GM13976 (cell line): ENCODE measurements at regions of chr1 and their contacts with region 1.

Region 1: GRCh38 chr1:234842726-234843641 is 233.0 kb upstream of the IRF2BP2 start:
- DNase-seq: peak; percentile 69
- CTCF ChIP-seq: no peak

Region 2: DNA sequence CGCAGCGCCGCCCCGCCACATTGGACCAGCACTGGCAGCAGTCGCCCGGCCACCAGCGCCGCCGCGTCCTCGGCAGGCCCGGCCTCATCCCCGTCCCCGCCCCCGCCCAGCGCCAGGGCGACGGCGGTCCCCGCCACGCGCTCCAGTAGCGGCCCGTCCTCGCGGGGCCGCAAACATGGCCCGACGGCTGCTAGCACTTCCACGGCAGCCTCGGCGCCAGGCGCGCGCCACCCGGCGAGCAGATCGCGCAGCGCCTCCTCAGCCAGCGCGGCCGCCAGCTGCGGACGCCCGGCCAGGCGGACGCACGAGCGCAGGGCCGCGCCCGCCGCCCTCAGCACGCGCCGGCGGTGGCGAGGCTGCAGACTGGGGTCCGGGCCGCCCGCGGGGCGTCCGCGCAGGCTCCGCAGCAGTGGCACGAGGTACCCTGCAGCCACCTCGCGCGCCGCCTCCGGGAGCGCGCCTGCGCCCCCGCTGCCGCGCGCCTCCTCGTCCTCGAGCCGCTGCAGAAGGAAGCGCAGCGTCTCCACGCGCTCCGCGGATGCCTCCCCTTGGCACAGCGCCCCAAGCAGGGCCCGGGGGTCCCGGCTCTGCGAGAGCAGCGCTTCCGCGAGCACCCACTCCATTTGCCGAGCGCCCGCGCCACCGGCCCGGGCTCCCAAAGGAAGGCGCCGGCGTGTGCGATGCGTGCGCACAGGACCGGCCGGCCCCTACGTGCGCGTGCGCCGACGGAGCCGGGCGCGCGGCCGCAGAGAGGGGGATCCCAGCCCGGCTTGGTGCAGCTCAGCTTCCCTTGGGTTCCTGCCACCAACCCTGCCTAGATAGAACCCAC is 364.3 kb before region 1 on chr1 and contains the start of gene TARBP1:
- in situ Hi-C with region 1: no loop called
- DNase-seq: peak; percentile 87
- CTCF ChIP-seq: peak; percentile 51

Region 3: DNA sequence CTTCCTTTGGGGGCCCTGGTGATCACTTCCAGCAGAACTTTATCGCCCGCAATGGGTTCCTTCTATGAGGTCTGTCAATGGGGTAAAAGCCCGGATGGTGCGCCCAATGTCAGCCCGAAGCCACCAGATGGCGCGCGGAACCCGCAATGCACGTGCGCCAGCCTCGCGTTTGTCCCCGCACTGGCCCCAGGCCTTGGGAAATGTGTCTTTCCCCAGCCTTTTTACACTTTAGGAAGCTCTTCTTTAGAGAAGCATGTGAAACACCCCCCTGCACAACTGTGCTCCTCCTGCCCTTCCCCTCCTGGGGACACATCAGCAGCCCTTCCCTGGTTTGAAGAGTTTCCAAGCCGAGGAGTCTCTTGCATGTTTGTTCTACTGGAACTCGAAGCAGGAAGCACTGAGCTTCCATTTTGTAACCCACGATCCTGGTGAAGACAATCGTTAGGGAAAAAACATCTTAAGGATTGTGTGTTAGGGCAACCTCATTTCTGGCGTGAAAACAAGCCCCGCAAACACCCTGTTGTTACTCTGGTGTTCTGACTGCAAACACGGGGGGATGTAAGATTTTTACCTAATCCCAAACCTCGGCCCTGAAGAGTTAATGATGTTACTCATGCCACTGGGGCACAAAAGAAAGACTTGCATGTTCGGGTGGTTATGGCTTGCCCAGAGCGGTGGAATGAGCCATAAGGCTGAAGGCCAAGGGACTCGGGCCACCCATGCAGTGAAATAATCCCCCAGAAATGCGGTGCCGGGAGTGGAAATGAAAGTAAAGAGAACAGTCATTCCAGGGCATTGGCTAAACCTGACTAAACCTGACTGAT is 343.7 kb before region 1 on chr1:
- in situ Hi-C with region 1: loop called (anchors 10 kb)
- DNase-seq: peak; percentile 75
- CTCF ChIP-seq: peak; percentile 90

Region 4: DNA sequence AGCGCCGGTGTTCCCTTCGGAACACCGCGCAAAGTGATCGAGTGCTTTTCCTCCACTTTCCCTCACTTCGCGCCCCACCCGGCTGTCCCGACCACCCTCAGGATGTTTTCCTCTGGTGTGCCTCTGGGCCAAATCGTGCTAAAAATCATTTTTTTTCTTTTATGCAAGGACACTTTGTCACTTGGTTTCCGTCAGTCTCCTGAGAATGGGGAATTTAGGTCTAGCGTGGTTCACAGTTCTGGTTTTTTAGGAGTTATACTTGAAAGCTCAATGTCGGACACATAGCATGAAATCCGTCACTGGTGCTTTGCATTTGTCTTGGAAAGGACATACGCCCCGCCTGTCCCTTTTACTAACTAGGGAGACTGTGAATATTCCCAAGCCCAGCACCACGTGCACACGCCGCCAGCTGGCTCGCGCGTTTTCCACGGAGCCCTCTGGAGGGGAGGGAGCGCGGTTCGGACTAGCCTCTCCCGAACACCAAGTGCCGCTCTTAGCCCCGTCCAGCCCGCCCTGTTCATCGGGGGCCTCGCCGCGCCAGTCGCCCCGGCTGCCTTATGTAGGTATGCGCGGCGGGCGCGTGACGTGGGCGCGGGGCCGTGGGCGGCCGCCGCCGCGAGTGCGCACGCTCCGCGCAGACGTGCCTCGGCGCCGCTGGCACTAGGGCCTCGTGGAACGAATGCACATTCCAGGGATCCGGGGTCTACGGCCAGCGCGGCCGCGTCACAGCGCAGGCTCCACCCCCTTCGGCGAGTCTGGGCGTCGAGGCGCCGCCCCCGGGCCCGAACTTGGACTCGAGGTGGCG is 232.4 kb before region 1 on chr1:
- in situ Hi-C with region 1: loop called (anchors 25 kb)
- DNase-seq: peak; percentile 91
- CTCF ChIP-seq: no peak

Region 5: DNA sequence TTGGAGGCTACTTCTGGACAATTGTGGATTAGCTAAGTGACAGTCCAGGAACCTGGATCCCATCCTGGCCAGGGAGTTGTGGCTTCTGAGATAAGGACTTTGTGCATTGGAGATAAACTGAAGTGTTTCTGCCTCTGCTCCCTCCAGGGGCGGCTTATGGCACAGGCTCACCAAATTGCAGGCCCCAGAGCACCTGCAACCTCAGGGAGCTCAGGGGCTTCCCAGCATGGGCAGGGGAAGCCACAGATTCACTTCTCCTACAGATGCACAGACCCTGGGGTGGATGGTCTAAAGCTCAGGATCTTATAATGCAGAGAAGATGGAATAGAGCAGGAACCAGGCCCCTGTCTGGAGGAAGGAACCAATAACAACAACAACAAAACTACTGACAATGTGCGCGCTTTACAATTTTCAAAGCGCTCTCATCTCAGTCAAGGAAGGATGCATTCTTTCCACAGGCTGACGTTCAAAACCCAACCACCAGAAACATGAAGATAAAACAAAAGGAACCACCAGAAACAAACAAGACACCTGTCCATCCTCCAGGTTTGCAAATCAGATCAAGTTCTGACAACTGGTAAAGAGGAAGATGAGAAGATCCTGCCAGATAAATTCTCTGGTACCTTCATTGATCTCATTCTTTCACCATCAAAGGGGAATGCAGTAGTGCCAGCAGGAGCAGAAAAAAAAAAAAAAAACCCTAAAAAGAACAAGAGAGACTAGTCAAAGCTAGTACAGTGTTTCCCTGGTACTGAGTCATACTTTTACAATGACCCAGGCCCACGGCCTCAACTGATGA is 112.0 kb before region 1 on chr1:
- in situ Hi-C with region 1: loop called (anchors 25 kb)
- DNase-seq: peak; percentile 82
- CTCF ChIP-seq: peak; percentile 6

Region 6: DNA sequence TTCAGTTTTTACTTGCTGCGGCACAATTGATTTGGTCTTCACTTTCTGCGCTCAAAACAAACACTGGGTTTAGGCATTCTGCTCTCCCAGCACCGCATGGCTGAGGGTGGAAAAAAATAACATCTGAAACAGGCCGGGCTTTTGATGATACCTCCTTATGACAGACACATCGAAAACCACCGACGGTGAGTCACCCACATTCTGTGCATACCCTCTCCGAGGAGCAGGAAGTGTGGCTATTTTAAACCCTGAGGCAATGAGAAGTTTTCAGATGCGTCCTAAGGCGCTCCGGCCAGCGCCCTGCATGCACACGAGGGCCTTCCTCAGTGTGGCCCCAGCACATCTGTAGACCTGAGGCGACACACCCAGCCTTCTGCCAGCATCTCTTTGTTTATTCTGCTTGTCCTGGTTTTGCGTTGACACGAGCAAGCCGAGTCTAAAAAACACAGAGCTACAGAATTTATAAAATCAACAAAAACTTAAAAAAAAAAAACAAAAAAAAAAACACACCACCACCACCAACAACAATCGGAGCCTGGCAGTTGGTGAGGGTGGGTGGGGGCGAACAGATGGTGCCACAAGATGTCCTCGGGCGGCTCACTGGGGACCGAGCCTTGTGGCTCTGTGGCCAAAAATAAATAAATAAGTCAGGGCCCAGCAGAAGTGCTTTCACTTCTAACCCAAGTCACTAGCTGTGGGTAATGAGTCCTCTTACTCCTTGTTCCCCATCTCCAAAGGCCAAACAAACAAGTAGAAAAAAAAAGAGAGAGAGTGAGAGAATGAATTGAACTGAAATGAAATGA is 70.4 kb before region 1 on chr1:
- in situ Hi-C with region 1: no loop called
- DNase-seq: peak; percentile 89
- CTCF ChIP-seq: peak; percentile 1

Region 7: GRCh38 chr1:234918181-234918841 is 75.3 kb after region 1 on chr1:
- in situ Hi-C with region 1: no loop called
- DNase-seq: no peak
- CTCF ChIP-seq: no peak